PC-3 (cell line): ENCODE measurements at regions of chr4 and their contacts with region 1.

Region 1: GRCh38 chr4:128809477-128810330 is at the start of gene JADE1:
- DNase-seq: peak; percentile 85
- ATAC-seq: peak; percentile 62
- H3K4me3 ChIP-seq: peak within 1 kb of the TSS; percentile 82
- H3K27ac ChIP-seq: peak within 1 kb of the TSS; percentile 64
- H3K4me1 ChIP-seq: peaks cover 5% of the 10 kb centered on the region; the same call in 1 of the 2 replicates
- H3K27me3 ChIP-seq: no peaks in the 10 kb centered on the region
- CTCF ChIP-seq: peak; percentile 55
- total RNA-seq, gene JADE1: 10.8 and 10.9 TPM in 2 replicates

Region 2: DNA sequence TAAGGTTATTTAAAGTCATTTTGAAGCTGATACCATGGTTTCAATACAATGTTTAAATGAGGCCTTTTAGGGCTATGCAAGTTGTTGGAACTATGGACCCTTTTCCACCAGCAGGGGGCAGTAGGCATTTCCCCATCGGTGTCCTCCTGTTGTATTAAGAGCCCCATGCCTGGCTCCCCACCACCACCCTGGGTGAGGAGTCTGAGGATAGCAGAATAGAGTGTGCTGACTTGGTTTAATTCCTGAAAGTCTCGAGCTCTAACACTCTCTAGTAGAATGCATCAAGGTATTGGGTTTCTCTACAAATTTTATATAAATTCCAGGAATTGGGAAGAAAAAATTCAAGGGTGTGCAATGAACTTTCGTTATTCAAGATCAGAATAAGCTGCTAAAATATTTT is 235.0 kb before region 1 on chr4:
- CTCF ChIA-PET with region 1: no interaction called
- POLR2A ChIA-PET with region 1: no interaction called
- intact Hi-C with region 1: loop called (anchors 2 kb)
- DNase-seq: peak; percentile 67
- ATAC-seq: no peak
- H3K4me3 ChIP-seq: no peak overlapping the region
- H3K27ac ChIP-seq: no peak overlapping the region
- H3K4me1 ChIP-seq: peaks cover 24% of the 10 kb centered on the region
- H3K27me3 ChIP-seq: no peaks in the 10 kb centered on the region
- CTCF ChIP-seq: peak; percentile 71

Region 3: DNA sequence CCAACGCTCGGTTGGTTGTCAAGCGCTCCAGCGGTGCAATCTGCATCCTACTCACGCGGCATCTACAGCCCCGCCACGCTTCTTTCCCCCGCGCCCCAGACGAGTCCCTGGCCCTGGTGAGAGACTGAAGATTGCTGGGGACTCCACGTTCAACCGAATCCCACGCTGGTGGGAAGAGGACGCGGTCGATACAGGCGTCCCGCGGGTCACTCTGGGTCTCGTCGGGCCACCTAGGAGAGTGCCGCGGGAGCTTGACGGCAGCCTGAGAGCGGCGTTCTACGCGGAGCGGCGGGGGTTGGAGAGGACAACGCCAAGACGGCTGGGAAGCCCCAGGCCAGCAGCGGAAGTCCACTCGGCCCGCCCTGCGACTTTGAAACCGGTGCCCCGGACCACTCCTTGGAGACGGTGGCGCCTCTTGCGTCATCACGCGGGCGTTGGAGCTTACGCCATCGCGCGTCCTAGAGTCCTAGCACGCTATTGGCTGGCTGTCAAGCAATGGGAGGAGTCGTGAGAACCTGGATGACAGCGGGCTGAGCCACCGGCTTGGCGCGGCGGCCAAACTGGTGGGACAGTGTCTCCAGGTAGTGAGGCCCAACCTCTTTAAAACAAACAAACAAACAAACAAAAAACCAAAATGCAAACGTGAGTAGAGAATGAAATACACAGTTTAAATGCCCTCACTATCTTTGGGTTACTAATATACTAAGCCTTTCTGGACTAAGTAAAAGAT is 283.7 kb after region 1 on chr4 and contains the start of gene SCLT1:
- CTCF ChIA-PET with region 1: no interaction called
- POLR2A ChIA-PET with region 1: no interaction called
- intact Hi-C with region 1: loop called (anchors 1 kb)
- DNase-seq: peak; percentile 98
- ATAC-seq: peak; percentile 87
- H3K4me3 ChIP-seq: peak within 1 kb of the TSS; percentile 83
- H3K27ac ChIP-seq: peak within 1 kb of the TSS; percentile 74
- H3K4me1 ChIP-seq: peaks cover 27% of the 10 kb centered on the region; the same call in 1 of the 2 replicates
- H3K27me3 ChIP-seq: no peaks in the 10 kb centered on the region
- CTCF ChIP-seq: no peak
- total RNA-seq, gene SCLT1: 14.2 and 15.2 TPM in 2 replicates